Right cardiac atrium (tissue), 5 donors: ENCODE measurements at regions of chr11 and their contacts with region 1.

Region 1: DNA sequence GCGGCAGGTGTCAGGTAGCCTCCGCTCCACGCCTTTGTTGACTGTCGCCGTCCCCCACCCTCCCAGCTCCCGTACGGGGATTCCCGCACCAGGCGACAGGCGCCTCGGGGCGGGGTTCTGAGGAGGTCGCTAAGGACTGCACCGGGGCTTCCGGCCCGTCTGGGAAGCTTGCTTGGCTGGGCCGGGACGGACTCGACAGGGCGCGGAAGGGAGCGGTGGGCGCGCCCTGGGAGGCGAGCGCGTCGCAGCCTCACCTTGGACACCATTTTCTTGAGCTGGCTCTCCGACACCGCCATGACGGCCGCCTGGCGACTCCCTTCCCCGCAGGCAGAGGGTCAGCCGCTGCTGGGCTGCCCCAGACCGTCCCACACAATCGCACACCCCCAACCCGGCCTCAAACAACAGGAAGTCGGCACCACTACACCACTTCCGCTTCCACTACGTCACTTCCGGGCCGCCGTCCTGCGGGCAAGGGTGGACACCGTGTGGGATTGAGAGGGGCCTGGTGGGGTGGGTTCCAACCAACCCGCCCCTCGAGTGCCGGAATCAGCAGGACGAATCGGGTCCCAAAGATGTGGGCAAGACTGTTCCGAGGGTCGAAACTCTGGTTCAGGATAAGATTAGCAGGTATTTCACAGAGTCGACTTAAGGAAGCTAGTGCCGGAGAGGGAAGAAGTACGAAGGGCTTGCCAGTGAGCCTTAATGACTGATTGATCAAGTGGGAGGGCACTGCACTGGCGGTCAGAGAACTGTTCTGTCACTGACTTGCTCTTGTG is at the start of gene TSG101:
- DNase-seq: peak; percentile 95 to 98 (median 97)
- ATAC-seq: peak; percentile 100
- H3K4me3 ChIP-seq: peak within 1 kb of the TSS; percentile 65
- H3K27ac ChIP-seq: peak within 1 kb of the TSS; percentile 91
- H3K4me1 ChIP-seq: no peaks in the 10 kb centered on the region
- H3K27me3 ChIP-seq: no peaks in the 10 kb centered on the region
- total RNA-seq, gene TSG101: 52.2 to 58.4 (median 56.0) TPM

Region 2: GRCh38 chr11:18321980-18322711 is 204.6 kb before region 1 on chr11 and contains the starts of genes GTF2H1 and HPS5:
- intact Hi-C with region 1: loop called in 1 of 4 experiments (anchors 10 kb)
- DNase-seq: peak; percentile 96 to 98 (median 97)
- ATAC-seq: peak; percentile 99
- H3K4me3 ChIP-seq: peak within 1 kb of the TSS; percentile 80
- H3K27ac ChIP-seq: peak within 1 kb of the TSS; percentile 82
- H3K4me1 ChIP-seq: peaks cover 5% of the 10 kb centered on the region
- H3K27me3 ChIP-seq: no peaks in the 10 kb centered on the region
- total RNA-seq, gene GTF2H1: 23.9 to 26.3 (median 24.5) TPM
- total RNA-seq, gene HPS5: 12.3 to 13.7 (median 12.6) TPM